Activated CD4-positive, alpha-beta T cell treated with anti-CD3 and anti-CD28 coated beads for 36 hours (primary cell): ENCODE measurements at regions of chr7 and their contacts with region 1.

Region 1: DNA sequence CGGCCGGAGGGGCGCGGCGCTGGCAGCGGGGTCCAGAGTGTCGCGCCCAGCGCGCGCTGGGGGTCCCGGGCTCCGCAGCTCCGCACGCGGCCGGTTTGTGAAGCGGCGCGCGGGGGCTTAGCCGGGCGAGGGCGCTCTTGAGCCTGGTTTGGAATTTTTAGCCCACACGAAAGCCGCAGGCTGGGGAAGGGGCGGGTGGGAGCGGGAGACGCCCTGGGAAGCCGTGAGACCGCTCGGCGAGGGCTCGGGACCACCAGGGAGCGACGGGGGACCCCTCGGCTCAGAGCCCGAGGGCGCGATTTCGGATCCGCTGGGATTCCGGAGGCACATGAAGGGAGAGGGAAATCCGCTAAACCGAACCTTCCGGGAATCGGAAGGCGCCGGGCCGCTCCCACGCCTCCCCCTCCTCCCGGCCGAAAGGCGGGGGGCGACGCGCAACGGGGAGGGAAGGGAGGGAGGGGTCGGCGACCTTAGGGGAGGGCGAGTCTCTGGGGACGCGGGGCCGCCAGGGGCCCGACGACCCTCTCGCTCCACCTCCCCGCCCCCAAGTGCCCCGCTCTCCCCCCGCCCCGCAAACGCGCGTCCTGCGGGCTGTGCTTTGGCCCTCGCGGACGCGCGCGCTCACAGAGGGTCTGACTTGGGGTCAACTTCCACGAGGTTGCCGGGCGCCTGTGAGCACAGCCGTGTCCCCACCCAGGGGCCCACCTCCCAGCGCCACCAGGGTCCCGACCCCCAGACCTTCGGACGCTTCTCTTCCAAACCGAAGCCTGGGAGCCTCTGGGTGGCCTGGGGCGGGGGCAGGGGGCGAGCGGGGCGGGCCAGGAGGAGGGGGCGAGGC is 5.1 kb upstream of the ELFN1 start:
- DNase-seq: peak; percentile 77
- ATAC-seq: peak; percentile 36
- H3K4me3 Mint-ChIP-seq: no peak overlapping the region
- H3K27ac Mint-ChIP-seq: no peak overlapping the region
- H3K4me1 Mint-ChIP-seq: peaks cover 8% of the 10 kb centered on the region
- H3K27me3 Mint-ChIP-seq: peaks cover 24% of the 10 kb centered on the region

Region 2: DNA sequence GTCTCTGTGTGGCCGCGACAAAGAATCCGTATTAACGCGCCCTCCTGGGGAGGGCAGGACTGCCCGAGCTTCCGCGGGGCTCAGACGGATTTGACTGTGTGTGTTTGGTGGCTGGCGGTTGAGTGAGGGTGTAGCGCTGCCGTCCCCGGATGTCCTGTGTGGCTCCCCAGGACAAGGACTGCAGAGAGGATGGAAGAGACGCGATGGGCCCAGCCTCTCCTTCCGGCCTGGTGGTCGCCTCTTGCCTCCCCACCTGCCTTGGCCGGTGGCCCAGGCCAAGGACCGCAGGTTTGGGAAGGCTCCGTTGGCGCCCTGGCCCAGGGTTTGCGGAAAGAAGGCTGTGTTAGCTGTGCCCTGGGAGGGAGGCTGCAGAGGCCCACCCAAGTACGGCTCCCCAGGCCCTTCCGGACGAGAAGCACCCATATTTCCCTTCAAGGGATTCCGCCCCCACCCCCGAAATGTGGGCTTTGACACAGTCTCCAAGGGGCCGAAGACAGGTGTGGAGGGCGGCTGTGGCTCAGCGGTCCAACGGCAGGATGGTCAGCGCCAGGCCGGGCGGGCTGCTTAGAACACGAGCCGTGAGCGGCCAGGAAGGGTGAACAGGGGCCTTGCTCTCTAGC is 429.9 kb before region 1 on chr7:
- CTCF ChIA-PET with region 1: no interaction called
- POLR2A ChIA-PET with region 1: no interaction called
- intact Hi-C with region 1: loop called in 1 of 2 experiments (anchors 5 kb)
- DNase-seq: no peak
- ATAC-seq: no peak
- H3K4me3 Mint-ChIP-seq: no peak overlapping the region
- H3K27ac Mint-ChIP-seq: no peak overlapping the region
- H3K4me1 Mint-ChIP-seq: peaks cover 20% of the 10 kb centered on the region
- H3K27me3 Mint-ChIP-seq: peaks cover 55% of the 10 kb centered on the region

Region 3: GRCh38 chr7:1569833-1570633 is 94.9 kb before region 1 on chr7 and contains the start of gene PSMG3:
- CTCF ChIA-PET with region 1: no interaction called
- POLR2A ChIA-PET with region 1: no interaction called
- intact Hi-C with region 1: loop called in 1 of 2 experiments (anchors 5 kb)
- DNase-seq: peak; percentile 94
- ATAC-seq: peak; percentile 95
- H3K4me3 Mint-ChIP-seq: peak within 1 kb of the TSS; percentile 86
- H3K27ac Mint-ChIP-seq: peak within 1 kb of the TSS; percentile 92
- H3K4me1 Mint-ChIP-seq: peaks cover 37% of the 10 kb centered on the region
- H3K27me3 Mint-ChIP-seq: no peaks in the 10 kb centered on the region
- total RNA-seq, gene PSMG3: 21.4 to 33.0 TPM

Region 4: GRCh38 chr7:1758028-1758858 is 93.3 kb after region 1 on chr7:
- CTCF ChIA-PET with region 1: no interaction called
- POLR2A ChIA-PET with region 1: no interaction called
- intact Hi-C with region 1: loop called (anchors 2 to 10 kb)
- DNase-seq: peak; percentile 66
- ATAC-seq: peak; percentile 60
- H3K4me3 Mint-ChIP-seq: no peak overlapping the region
- H3K27ac Mint-ChIP-seq: no peak overlapping the region
- H3K4me1 Mint-ChIP-seq: peaks cover 3% of the 10 kb centered on the region
- H3K27me3 Mint-ChIP-seq: peaks cover 4% of the 10 kb centered on the region

Region 5: GRCh38 chr7:1919539-1920265 is 254.8 kb after region 1 on chr7:
- CTCF ChIA-PET with region 1: no interaction called
- POLR2A ChIA-PET with region 1: no interaction called
- intact Hi-C with region 1: loop called in 1 of 2 experiments (anchors 5 kb)
- DNase-seq: no peak
- ATAC-seq: peak; percentile 17
- H3K4me3 Mint-ChIP-seq: peak overlapping the region; percentile 68
- H3K27ac Mint-ChIP-seq: peak overlapping the region; percentile 76
- H3K4me1 Mint-ChIP-seq: peaks cover 70% of the 10 kb centered on the region
- H3K27me3 Mint-ChIP-seq: peaks cover 11% of the 10 kb centered on the region

Region 6: DNA sequence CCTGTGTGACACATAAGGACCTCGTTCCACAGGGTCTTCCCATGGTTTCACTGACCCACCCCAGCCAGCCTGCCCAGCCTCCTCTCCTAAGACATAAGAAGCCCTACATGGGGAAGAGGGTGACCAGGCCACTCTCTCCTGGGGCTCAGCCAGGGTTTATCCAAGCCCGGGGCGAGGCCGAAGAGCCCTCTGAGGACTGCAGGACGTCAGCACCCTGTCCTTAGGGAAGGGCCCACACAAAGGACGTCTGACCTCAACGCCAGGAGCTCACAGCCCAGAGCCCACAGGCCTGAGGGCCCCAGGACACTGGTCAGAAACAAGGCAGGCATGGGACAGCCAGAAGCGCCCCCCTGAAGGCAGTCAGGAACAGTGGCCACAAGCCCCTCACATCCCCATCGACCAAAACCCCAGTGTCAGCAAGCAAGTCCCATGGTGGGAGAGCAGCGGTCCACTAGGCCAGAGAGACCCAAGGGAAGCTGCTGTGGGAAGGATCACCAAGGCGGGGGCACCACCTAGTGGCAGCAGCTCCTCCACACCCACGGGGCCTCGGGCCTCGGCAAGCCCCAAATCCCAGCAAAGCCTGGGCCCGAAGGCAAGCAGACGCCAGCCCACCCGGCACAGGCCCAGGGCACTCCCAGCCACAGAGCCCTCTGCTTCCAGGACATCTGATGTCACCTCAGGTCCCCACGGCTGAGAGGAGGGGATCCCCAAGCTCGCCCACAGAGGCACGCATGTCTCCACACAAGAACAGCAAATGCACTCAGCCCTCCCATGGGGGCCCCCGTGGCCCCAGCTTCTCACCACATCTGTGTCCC is 544.4 kb after region 1 on chr7:
- CTCF ChIA-PET with region 1: no interaction called
- POLR2A ChIA-PET with region 1: no interaction called
- intact Hi-C with region 1: loop called in 1 of 2 experiments (anchors 1 kb)
- DNase-seq: peak; percentile 72
- ATAC-seq: no peak
- H3K4me3 Mint-ChIP-seq: no peak overlapping the region
- H3K27ac Mint-ChIP-seq: no peak overlapping the region
- H3K4me1 Mint-ChIP-seq: peaks cover 4% of the 10 kb centered on the region
- H3K27me3 Mint-ChIP-seq: no peaks in the 10 kb centered on the region

Region 7: GRCh38 chr7:2232766-2233520 is 568.0 kb after region 1 on chr7 and contains the start of gene MAD1L1:
- CTCF ChIA-PET with region 1: no interaction called
- POLR2A ChIA-PET with region 1: no interaction called
- intact Hi-C with region 1: loop called in 1 of 2 experiments (anchors 10 kb)
- DNase-seq: peak; percentile 95
- ATAC-seq: peak; percentile 94
- H3K4me3 Mint-ChIP-seq: peak within 1 kb of the TSS; percentile 83
- H3K27ac Mint-ChIP-seq: peak within 1 kb of the TSS; percentile 86
- H3K4me1 Mint-ChIP-seq: peaks cover 26% of the 10 kb centered on the region
- H3K27me3 Mint-ChIP-seq: no peaks in the 10 kb centered on the region
- total RNA-seq, gene MAD1L1: 50.2 to 61.7 TPM